A549 (cell line): ENCODE measurements at regions of chr12 and their contacts with region 1.

Region 1: GRCh38 chr12:122356192-122356635 is 66.3 kb downstream of the CLIP1 start:
- DNase-seq: peak; percentile 22 to 77
- ATAC-seq: peak; percentile 96 to 97
- H3K4me3 ChIP-seq: no peak overlapping the region
- H3K27ac ChIP-seq: no peak overlapping the region
- H3K4me1 ChIP-seq: no peaks in the 10 kb centered on the region
- CTCF ChIP-seq: peak; percentile 86
- EP300 ChIP-seq: no peak
- POLR2A ChIP-seq: no peak
- RAD21 ChIP-seq: peak; percentile 47 to 63

Region 2: DNA sequence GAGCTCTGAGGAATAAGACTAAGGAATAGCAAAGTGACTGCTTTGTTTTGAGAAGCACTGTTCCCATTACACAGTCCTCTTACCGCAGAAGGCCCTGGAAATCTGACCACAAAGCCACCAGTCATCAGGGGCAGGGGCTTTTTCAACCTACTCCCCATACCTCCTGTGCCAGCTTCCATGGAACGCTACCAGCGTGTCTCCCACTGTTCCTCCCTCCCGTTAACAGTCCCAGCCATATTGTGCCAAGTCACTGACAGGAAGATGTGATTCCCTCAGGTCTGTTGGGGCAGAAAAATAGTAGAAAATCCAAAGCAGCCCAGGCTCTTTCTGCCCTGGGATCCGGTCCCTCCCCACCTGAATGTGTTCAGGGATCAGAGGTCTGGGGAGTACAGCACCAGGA is 43.3 kb before region 1 on chr12:
- CTCF ChIA-PET with region 1: interaction called, 10 read pairs
- POLR2A ChIA-PET with region 1: no interaction called
- DNase-seq: no peak
- ATAC-seq: peak in 1 of 2 experiments; percentile 29; a peak in 2 of 6 replicates
- H3K4me3 ChIP-seq: no peak overlapping the region
- H3K27ac ChIP-seq: no peak overlapping the region
- H3K4me1 ChIP-seq: no peaks in the 10 kb centered on the region
- CTCF ChIP-seq: no peak
- EP300 ChIP-seq: no peak
- POLR2A ChIP-seq: no peak
- RAD21 ChIP-seq: no peak

Region 3: DNA sequence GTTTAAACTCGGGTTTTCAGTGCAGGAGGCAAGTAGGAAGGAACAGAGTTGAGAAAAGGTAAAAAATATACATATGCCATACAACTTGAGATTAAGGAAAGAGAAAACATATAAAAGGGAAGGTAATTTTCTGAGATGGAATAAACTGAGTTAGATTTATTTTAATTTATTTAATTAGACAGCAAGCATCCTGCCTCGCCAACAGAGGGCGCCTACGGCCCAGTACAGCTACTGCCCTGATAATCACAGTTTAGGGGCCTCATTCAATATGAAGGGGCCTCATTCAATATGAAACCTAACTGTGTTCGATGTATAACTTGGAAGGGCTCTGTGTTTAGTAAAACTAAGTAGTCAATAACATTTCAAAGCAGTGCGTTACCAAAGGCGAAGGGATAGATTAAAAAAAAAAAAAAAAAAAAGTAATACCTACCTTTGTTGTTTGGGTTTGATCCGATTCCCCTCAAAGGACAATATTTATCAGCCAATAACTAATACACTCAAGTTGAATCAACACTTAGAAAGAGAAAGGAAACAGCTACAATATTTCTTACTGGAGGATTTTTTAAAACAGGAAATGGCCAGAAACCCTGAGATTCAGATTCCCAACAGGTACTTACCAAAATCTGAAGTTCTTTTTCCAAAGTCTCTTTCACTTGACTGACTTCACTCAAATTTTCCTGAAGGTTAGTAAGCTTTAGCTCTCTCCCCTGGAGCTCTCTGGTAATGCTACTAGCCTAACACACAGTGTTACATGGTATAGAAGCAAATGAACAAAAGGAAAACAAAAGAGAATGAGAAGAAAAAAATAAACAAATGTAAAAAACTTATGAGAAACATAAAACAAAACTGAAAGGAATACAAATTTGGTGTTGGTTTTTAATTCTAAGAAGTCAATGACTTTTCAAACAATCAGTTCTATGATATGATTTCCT is 19.9 kb before region 1 on chr12:
- CTCF ChIA-PET with region 1: interaction called, 49 read pairs
- POLR2A ChIA-PET with region 1: no interaction called
- DNase-seq: peak; percentile 38 to 51
- ATAC-seq: peak in 1 of 2 experiments; percentile 80; a peak in 3 of 6 replicates
- H3K4me3 ChIP-seq: no peak overlapping the region
- H3K27ac ChIP-seq: no peak overlapping the region
- H3K4me1 ChIP-seq: no peaks in the 10 kb centered on the region; the same call in 2 of the 3 replicates
- CTCF ChIP-seq: peak; percentile 86
- EP300 ChIP-seq: no peak
- POLR2A ChIP-seq: no peak
- RAD21 ChIP-seq: peak; percentile 70 to 82

Region 4: DNA sequence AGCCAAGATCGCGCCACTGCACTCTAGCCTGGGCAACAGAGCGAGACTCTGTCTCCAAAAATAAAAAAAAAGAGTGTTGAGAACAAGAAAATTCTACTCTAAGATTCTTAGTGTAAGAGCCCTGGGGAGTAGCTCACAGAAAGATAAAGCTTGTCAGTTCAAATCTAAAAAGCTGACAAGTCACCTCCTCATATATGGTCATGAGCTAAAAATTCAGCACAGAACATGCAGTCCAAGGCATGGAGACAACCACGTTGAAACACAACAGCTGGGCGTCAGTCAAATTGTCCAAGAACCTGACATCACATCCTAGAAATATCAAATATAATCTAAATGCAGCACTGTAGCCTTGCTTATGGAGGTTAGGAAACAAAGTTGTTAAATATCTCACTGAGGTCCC is 18.5 kb after region 1 on chr12:
- CTCF ChIA-PET with region 1: interaction called, 27 read pairs
- POLR2A ChIA-PET with region 1: no interaction called
- DNase-seq: no peak
- ATAC-seq: no peak
- H3K4me3 ChIP-seq: no peak overlapping the region
- H3K27ac ChIP-seq: no peak overlapping the region
- H3K4me1 ChIP-seq: no peaks in the 10 kb centered on the region
- CTCF ChIP-seq: no peak
- EP300 ChIP-seq: no peak
- POLR2A ChIP-seq: no peak
- RAD21 ChIP-seq: no peak

Region 5: GRCh38 chr12:122895705-122896636 is 539.8 kb after region 1 on chr12 and contains the start of gene VPS37B:
- CTCF ChIA-PET with region 1: no interaction called
- POLR2A ChIA-PET with region 1: no interaction called
- DNase-seq: peak; percentile 87 to 98
- ATAC-seq: peak; percentile 77 to 85
- H3K4me3 ChIP-seq: peak within 1 kb of the TSS; percentile 89
- H3K27ac ChIP-seq: peak within 1 kb of the TSS; percentile 89 to 97
- H3K4me1 ChIP-seq: peaks cover 51% of the 10 kb centered on the region
- CTCF ChIP-seq: no peak
- EP300 ChIP-seq: no peak
- POLR2A ChIP-seq: peak; percentile 88
- RAD21 ChIP-seq: 0 out of 5 replicates have a peak, but pooled peaks of 1 of the 2 experiments have one; percentile 21
- polyA plus RNA-seq, gene VPS37B: 14.4 and 18.6 TPM in 2 replicates